ENCODE measurements at regions of chr9 and their contacts with region 1.

Region 1: GRCh38 chr9:93962561-93963440 is 7.6 kb upstream of the BARX1 start:
- DNase-seq: peak; percentile 72
- H3K4me3 Mint-ChIP-seq: no peak overlapping the region
- H3K27ac Mint-ChIP-seq: peak overlapping the region; percentile 15
- H3K4me1 Mint-ChIP-seq: peaks cover 27% of the 10 kb centered on the region
- H3K27me3 Mint-ChIP-seq: peaks cover 41% of the 10 kb centered on the region

Region 2: DNA sequence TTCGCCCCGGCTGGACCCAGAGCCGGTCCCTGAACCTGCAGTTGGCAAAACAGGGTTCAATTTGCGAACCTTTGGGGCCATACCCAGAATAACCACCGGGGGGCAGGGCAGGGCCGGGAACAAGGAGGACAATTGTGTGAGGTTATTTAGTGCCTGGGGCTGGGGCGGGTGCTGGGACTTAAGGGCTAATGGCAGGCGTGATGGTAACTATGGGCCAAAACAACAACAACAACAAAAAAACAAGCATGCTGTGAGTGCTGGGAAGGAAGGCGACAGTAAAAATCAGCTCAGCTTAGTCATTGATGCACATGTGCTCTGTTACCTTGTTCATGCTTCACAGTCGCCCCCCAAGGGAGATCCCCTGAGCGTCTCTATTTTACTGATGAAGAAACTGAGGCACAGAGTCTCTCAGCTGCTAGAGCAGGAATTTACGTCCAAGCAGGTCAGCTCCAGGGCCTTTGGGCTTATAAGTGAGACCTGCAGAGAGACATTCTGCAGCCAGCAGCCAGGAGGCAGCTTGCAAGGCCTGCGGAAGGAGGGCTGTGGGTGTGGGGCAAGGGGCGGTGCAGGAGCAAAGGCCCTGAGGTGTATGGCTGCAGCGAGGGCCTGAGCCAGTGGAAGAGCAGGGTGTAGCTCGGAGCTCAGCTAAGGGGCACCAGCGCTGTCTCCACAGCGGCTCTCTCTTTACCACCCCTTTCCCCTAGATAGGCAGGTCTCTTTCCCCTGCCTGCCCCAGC is 280.4 kb before region 1 on chr9:
- intact Hi-C with region 1: loop called (anchors 1 kb)
- DNase-seq: peak; percentile 43
- H3K4me3 Mint-ChIP-seq: no peak overlapping the region
- H3K27ac Mint-ChIP-seq: no peak overlapping the region
- H3K4me1 Mint-ChIP-seq: no peaks in the 10 kb centered on the region
- H3K27me3 Mint-ChIP-seq: peaks cover 6% of the 10 kb centered on the region

Region 3: GRCh38 chr9:93827545-93828330 is 135.1 kb before region 1 on chr9:
- intact Hi-C with region 1: loop called (anchors 2 kb)
- DNase-seq: no peak
- H3K4me3 Mint-ChIP-seq: no peak overlapping the region
- H3K27ac Mint-ChIP-seq: no peak overlapping the region
- H3K4me1 Mint-ChIP-seq: no peaks in the 10 kb centered on the region
- H3K27me3 Mint-ChIP-seq: peaks cover 17% of the 10 kb centered on the region

Measured in activated T-helper 2 cell treated with anti-CD3 and anti-CD28 coated beads, Interferon-gamma antibody, Interleukin-2, Interleukin-4, amounts not matched to agents 10 μg/mL and 5 μg/mL and 100 μg/mL, durations not matched to agents 14 hours and 24 hours and 36 hours (primary cell).